ENCODE measurements at regions of chrX and their contacts with region 1.

Region 1: DNA sequence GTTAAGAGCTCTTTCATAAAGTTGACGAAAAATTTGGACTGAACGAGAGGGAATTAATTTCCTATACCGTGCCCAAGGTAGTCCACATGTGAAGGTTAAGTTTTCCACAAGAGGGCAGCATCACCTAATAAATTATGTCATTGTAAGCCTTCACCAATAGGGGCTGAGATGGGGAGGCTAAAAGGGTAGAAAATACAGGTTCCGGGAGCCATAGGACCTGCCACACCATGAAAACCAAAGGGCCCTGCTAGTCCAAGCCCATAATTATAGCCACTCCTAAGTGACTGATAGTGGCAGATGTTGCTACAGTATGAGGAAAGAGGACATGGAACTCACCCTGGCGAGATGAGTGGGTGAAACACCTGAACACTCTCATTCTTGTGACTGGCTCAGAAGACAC is 122.2 kb downstream of the SHROOM4 start:
- DNase-seq: peak; percentile 7
- H3K4me3 Mint-ChIP-seq: no peak overlapping the region
- H3K27ac Mint-ChIP-seq: no peak overlapping the region
- H3K4me1 Mint-ChIP-seq: no peaks in the 10 kb centered on the region
- H3K27me3 Mint-ChIP-seq: peaks cover 2% of the 10 kb centered on the region

Region 2: DNA sequence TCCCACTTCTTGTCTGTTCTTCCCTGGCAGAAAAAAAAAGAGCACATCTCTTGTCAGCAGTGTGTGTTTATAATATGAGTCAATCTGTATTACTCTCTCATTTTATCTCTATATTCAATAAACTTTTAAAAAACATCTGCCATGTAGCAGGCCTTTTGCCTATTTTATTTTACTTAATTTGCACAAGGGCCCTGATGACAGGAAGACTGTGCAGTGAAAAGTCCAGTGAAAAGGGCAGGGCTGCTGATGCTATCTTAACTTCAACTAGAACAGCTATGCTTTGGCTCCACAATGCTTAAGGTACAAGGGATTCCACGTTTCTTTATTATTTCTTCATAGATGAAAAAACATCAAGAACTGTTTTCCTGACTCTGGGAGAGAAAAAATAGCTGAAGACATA is 124.2 kb before region 1 on chrX:
- CTCF ChIA-PET with region 1: no interaction called
- POLR2A ChIA-PET with region 1: no interaction called
- intact Hi-C with region 1: no loop called
- DNase-seq: no peak
- H3K4me3 Mint-ChIP-seq: no peak overlapping the region
- H3K27ac Mint-ChIP-seq: no peak overlapping the region
- H3K4me1 Mint-ChIP-seq: no peaks in the 10 kb centered on the region
- H3K27me3 Mint-ChIP-seq: no peaks in the 10 kb centered on the region

Region 3: GRCh38 chrX:50668860-50669259 is 23.0 kb before region 1 on chrX:
- CTCF ChIA-PET with region 1: no interaction called
- POLR2A ChIA-PET with region 1: no interaction called
- intact Hi-C with region 1: no loop called
- DNase-seq: no peak
- H3K4me3 Mint-ChIP-seq: no peak overlapping the region
- H3K27ac Mint-ChIP-seq: no peak overlapping the region
- H3K4me1 Mint-ChIP-seq: no peaks in the 10 kb centered on the region
- H3K27me3 Mint-ChIP-seq: peaks cover 1% of the 10 kb centered on the region

Region 4: GRCh38 chrX:50707405-50707804 is 15.6 kb after region 1 on chrX:
- CTCF ChIA-PET with region 1: no interaction called
- POLR2A ChIA-PET with region 1: no interaction called
- intact Hi-C with region 1: no loop called
- DNase-seq: no peak
- H3K4me3 Mint-ChIP-seq: no peak overlapping the region
- H3K27ac Mint-ChIP-seq: no peak overlapping the region
- H3K4me1 Mint-ChIP-seq: no peaks in the 10 kb centered on the region
- H3K27me3 Mint-ChIP-seq: peaks cover 4% of the 10 kb centered on the region

Region 5: DNA sequence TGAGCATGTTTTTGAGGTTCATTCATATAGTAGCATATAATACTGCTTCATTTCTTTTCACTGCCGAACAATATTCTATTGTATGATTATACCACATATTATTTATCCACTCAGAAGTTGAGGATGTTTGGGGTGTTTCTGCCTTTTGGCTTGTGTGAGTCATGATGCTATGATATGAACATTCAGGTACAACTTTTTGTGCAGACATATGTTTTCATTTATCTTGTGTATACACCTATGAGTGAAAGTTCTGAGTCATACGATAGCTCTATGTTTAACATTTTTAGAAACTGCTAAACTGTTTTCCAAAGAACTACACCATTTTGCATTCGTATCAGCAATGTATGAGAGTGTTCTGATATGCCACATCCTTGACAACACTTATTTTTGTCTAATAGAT is 64.5 kb after region 1 on chrX:
- CTCF ChIA-PET with region 1: no interaction called
- POLR2A ChIA-PET with region 1: no interaction called
- intact Hi-C with region 1: no loop called
- DNase-seq: no peak
- H3K4me3 Mint-ChIP-seq: no peak overlapping the region
- H3K27ac Mint-ChIP-seq: no peak overlapping the region
- H3K4me1 Mint-ChIP-seq: no peaks in the 10 kb centered on the region
- H3K27me3 Mint-ChIP-seq: no peaks in the 10 kb centered on the region

Region 6: GRCh38 chrX:50988649-50989048 is 296.8 kb after region 1 on chrX:
- CTCF ChIA-PET with region 1: interaction called, 10 read pairs
- POLR2A ChIA-PET with region 1: no interaction called
- intact Hi-C with region 1: loop called (anchors 2 kb)
- DNase-seq: peak; percentile 9
- H3K4me3 Mint-ChIP-seq: no peak overlapping the region
- H3K27ac Mint-ChIP-seq: no peak overlapping the region
- H3K4me1 Mint-ChIP-seq: no peaks in the 10 kb centered on the region
- H3K27me3 Mint-ChIP-seq: peaks cover 3% of the 10 kb centered on the region